ENCODE measurements at regions of chr6 and their contacts with region 1.

Region 1: GRCh38 chr6:47309291-47310130 is at the start of gene TNFRSF21:
- DNase-seq: peak; percentile 92 to 97 (median 94)
- ATAC-seq: peak; percentile 97 to 99 (median 98)
- H3K4me3 ChIP-seq: peak within 1 kb of the TSS; percentile 54 to 62 (median 55)
- H3K27ac ChIP-seq: peak within 1 kb of the TSS; percentile 23 to 79 (median 71)
- H3K4me1 ChIP-seq: peaks cover 0 to 5% (median 0%) of the 10 kb centered on the region in 3 donors
- H3K27me3 ChIP-seq: peaks cover 0 to 5% (median 0%) of the 10 kb centered on the region in 4 donors
- CTCF ChIP-seq: peak; percentile 87 to 95 (median 90)
- total RNA-seq, gene TNFRSF21: 9.9 to 50.1 (median 15.8) TPM

Region 2: DNA sequence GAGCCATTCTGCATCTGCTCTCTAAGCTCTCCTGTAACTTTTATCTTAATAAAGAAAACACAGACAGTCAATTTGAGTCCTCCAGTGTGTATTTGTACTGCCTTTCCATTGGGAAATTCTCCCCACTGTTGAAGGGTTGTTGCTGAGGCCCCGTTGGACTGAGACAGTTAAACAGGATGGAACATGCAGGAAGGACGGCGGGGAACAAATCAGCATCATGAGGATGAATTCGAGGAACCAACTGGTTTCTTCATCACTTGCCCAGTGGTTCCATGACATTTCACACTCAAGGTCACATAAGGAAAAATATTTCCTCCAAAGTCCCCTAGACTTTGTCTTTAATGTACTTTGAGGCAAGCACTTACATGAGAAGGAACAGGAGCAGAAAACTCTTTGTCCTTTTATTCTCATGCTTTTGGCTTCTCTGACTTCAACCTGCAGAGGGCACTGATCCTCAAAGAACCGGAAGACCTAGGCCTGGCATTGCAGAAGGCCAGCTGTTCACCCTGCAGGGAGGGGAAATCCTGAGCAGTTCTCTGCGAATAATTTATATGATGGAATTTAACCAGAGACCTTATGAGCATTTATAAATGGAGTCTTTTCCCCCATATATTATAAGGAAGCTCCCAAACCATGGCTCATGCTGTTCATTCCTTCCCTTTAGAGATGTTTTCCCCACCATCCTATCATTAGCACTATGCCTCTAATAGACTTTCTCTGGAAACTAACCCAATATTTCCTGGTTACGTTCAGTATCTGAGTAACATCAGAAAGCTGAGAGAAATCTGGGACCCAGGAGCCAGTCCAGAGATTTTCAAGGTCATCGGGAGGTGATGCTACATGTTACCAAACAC is 212.2 kb before region 1 on chr6:
- intact Hi-C with region 1: loop called (anchors 5 to 10 kb)
- DNase-seq: peak in 4 of 6 donors; percentile 52 to 80 (median 66)
- ATAC-seq: peak; percentile 91 to 96 (median 94)
- H3K4me3 ChIP-seq: no peak overlapping the region
- H3K27ac ChIP-seq: peak overlapping the region in 2 of 4 donors; percentile 5 to 28
- H3K4me1 ChIP-seq: no peaks in the 10 kb centered on the region
- H3K27me3 ChIP-seq: no peaks in the 10 kb centered on the region
- CTCF ChIP-seq: peak; percentile 28 to 55 (median 50)

Region 3: DNA sequence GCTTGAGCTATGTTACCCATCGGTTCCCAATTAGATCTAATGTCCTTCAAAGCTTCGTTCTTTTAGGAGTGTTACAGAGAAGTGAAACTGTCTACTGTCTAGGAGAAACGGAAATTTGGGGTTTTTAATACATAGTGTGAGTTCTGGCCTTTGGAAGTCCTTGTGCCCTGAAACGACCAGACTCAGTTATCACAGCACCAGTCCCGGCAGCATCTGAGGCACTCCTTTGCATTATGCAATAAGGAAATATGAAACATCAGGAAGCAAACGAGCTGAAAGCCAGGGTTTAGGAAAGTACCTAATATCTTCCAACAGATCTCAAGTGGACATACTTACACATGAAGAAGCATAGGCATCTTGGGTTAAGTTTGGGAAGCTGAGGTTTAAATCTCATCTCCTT is 205.6 kb before region 1 on chr6:
- intact Hi-C with region 1: loop called (anchors 5 to 10 kb)
- DNase-seq: no peak
- ATAC-seq: peak in 3 of 4 donors; percentile 34 to 82 (median 76)
- H3K4me3 ChIP-seq: no peak overlapping the region
- H3K27ac ChIP-seq: no peak overlapping the region
- H3K4me1 ChIP-seq: no peaks in the 10 kb centered on the region
- H3K27me3 ChIP-seq: no peaks in the 10 kb centered on the region
- CTCF ChIP-seq: no peak

Region 4: GRCh38 chr6:47242483-47243386 is 66.8 kb before region 1 on chr6:
- intact Hi-C with region 1: loop called in 1 of 3 experiments (anchors 10 kb)
- DNase-seq: peak; percentile 89 to 92 (median 91)
- ATAC-seq: peak; percentile 96 to 98 (median 97)
- H3K4me3 ChIP-seq: no peak overlapping the region
- H3K27ac ChIP-seq: peak overlapping the region in 3 of 4 donors; percentile 33 to 80 (median 65)
- H3K4me1 ChIP-seq: peaks cover 22 to 31% (median 26%) of the 10 kb centered on the region in 3 donors
- H3K27me3 ChIP-seq: no peaks in the 10 kb centered on the region
- CTCF ChIP-seq: no peak

Region 5: DNA sequence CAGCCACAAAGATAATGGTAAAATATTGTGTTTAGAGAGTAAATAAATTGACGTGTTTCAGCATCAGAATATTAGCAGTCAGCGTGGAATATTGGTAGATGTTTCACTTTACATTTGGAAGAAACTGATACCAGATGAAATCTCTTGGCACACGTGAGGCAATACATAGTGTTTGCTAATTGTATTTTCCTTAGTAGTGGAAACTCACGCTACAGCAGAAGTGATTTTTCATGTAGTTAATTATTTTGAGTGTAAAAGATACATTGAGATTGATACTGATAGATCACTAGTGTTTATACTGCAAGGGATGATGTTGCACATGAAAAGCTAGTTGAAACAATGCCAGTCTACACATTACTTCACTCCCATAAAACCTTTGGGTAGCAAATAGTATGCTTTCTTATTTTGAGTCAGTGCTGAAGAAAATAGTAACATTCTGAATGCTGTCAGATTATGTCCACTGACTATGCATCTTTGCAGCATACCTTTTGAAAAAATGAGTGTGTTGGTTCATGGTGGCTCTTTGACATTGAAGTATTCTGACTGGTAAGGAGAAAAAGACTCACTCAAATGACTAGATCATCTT is 227.4 kb after region 1 on chr6:
- intact Hi-C with region 1: no loop called
- DNase-seq: no peak
- ATAC-seq: no peak
- H3K4me3 ChIP-seq: no peak overlapping the region
- H3K27ac ChIP-seq: no peak overlapping the region
- H3K4me1 ChIP-seq: peaks cover 0 to 5% (median 3%) of the 10 kb centered on the region in 3 donors
- H3K27me3 ChIP-seq: no peaks in the 10 kb centered on the region
- CTCF ChIP-seq: no peak

Measured in pancreas (tissue), 10 donors.